T-cell (primary cell): ENCODE measurements at regions of chr4 and their contacts with region 1.

Region 1: GRCh38 chr4:83110223-83110945 is 4.1 kb downstream of the PLAC8 start:
- DNase-seq: peak; percentile 75 to 93 (median 87)
- ATAC-seq: peak; percentile 79 to 81 (median 80)
- H3K4me3 ChIP-seq: peak overlapping the region; percentile 76 to 84
- H3K4me3 Mint-ChIP-seq: peak overlapping the region; percentile 90 to 95 (median 95)
- H3K27ac ChIP-seq: peak overlapping the region; percentile 79
- H3K27ac Mint-ChIP-seq: peak overlapping the region; percentile 92 to 98
- H3K4me1 ChIP-seq: peaks cover 26 to 51% of the 10 kb centered on the region in 2 experiments
- H3K4me1 Mint-ChIP-seq: peaks cover 51 to 65% (median 58%) of the 10 kb centered on the region in 3 donors
- H3K27me3 ChIP-seq: no peaks in the 10 kb centered on the region
- H3K27me3 Mint-ChIP-seq: no peaks in the 10 kb centered on the region

Region 2: DNA sequence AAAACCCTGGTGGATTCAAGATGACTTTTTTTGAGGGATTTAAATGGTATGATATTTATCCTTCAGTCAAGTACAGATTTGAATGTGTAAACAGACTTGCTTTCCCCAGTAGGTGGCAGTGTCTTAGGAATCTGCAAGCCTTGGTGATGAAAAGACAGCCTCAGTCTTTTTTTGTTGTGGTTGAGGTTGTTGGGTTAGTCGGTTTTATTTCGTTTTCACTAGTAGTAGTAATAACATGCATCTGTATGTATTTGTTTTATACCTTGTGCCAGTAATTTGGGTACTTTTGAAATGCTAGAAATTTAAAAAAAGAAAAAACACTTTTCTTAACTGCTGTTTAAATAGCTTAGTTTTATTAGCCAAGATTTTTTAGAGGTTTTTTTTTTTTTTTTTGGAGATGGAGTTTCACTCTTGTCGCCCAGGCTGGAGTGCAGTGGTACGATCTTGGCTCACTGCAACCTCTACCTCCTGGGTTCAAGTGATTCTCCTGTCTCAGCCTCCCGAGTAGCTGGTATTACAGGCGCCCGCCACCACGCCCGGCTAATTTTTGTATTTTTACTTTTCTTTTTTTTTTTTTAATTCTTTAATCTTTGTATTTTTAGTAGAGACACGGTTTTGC is 36.2 kb before region 1 on chr4:
- CTCF ChIA-PET with region 1: interaction called, 6 to 21 read pairs
- POLR2A ChIA-PET with region 1: interaction called, 3 to 7 read pairs
- DNase-seq: peak in 30 of 35 experiments; percentile 14 to 92 (median 54)
- ATAC-seq: peak; percentile 89 to 97 (median 92)
- H3K4me3 ChIP-seq: no peak overlapping the region
- H3K4me3 Mint-ChIP-seq: peak overlapping the region; percentile 47 to 67 (median 55)
- H3K27ac ChIP-seq: no peak overlapping the region
- H3K27ac Mint-ChIP-seq: peak overlapping the region; percentile 49 to 81
- H3K4me1 ChIP-seq: peaks cover 0 to 7% of the 10 kb centered on the region in 2 experiments
- H3K4me1 Mint-ChIP-seq: peaks cover 5 to 28% (median 18%) of the 10 kb centered on the region in 3 donors
- H3K27me3 ChIP-seq: no peaks in the 10 kb centered on the region
- H3K27me3 Mint-ChIP-seq: no peaks in the 10 kb centered on the region

Region 3: DNA sequence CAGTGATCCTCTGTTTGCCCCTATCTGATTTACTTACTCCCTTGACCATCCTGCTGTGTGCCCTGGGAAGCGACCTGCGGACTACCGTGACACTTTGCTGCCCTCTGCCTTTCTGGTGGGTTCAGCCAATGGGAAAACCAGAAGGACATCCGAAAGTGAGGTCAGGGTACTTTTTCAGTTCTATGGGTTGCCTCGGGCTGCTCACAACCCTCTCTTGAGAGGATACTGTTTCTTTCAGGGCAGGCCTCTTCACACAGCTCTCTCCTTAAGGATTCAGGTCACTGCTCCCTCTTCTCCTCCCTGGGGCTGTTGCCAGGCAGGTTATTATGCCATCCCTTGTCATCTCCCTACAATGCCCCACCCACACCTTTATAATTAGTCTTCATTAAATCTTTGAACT is 17.3 kb before region 1 on chr4:
- CTCF ChIA-PET with region 1: interaction called, 6 to 12 read pairs
- POLR2A ChIA-PET with region 1: interaction called, 8 to 9 read pairs
- DNase-seq: no peak
- ATAC-seq: no peak
- H3K4me3 ChIP-seq: no peak overlapping the region
- H3K4me3 Mint-ChIP-seq: no peak overlapping the region
- H3K27ac ChIP-seq: no peak overlapping the region
- H3K27ac Mint-ChIP-seq: peak overlapping the region; percentile 47 to 60
- H3K4me1 ChIP-seq: peaks cover 2 to 9% of the 10 kb centered on the region in 2 experiments
- H3K4me1 Mint-ChIP-seq: peaks cover 35 to 67% (median 56%) of the 10 kb centered on the region in 3 donors
- H3K27me3 ChIP-seq: no peaks in the 10 kb centered on the region
- H3K27me3 Mint-ChIP-seq: no peaks in the 10 kb centered on the region

Region 4: DNA sequence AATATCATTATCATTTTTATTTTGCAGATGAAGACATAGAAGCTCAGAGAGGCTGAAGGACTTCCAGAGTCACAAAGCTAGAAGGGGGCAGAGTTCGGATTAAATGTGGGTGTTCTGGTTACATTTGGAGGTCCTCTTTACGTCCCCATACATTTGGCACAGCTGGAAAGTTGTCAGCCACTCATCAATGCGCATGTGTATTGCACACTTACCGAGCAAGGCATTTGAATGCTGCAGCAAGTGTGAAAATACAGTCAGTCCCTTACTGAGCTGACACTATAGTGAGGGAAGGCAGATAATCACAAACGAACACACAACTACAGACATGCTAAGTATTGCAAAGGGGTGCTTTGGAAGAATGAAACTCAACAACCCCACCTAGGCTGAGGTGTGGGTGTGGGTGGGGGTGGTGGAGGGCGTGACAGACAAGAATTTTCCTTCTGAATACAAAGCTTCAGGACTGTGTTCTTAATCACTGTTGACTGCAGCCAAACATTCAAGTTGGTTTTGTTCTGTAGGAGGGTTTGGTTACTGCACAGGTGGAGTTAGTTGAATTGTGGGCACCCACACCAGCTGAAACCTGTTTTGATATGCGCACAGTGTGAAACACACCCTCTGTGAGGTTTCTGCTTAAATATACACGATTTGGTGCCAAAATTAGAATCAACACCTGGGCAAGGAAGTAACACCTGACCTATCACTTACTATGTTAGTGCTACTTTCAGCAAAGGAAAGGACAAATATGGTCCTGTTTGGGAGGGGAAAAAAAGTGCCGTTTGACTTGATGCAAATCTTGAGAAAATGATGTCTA is 101.9 kb after region 1 on chr4:
- CTCF ChIA-PET with region 1: interaction called, 3 to 29 read pairs
- POLR2A ChIA-PET with region 1: interaction called, 4 to 10 read pairs
- DNase-seq: peak; percentile 22 to 88 (median 70)
- ATAC-seq: peak; percentile 93 to 96 (median 94)
- H3K4me3 ChIP-seq: no peak overlapping the region
- H3K4me3 Mint-ChIP-seq: peak overlapping the region; percentile 26 to 71 (median 38)
- H3K27ac ChIP-seq: peak overlapping the region; percentile 82
- H3K27ac Mint-ChIP-seq: peak overlapping the region; percentile 89 to 90
- H3K4me1 ChIP-seq: peaks cover 54 to 61% of the 10 kb centered on the region in 2 experiments
- H3K4me1 Mint-ChIP-seq: peaks cover 72 to 86% (median 80%) of the 10 kb centered on the region in 3 donors
- H3K27me3 ChIP-seq: no peaks in the 10 kb centered on the region
- H3K27me3 Mint-ChIP-seq: no peaks in the 10 kb centered on the region

Region 5: GRCh38 chr4:83252782-83253405 is 142.5 kb after region 1 on chr4:
- CTCF ChIA-PET with region 1: interaction called, 12 to 54 read pairs
- POLR2A ChIA-PET with region 1: interaction called in 1 of 2 experiments, 4 read pairs
- DNase-seq: peak; percentile 38 to 88 (median 72)
- ATAC-seq: peak; percentile 75 to 94 (median 88)
- H3K4me3 ChIP-seq: no peak overlapping the region
- H3K4me3 Mint-ChIP-seq: peak overlapping the region in 1 of 3 donors; percentile 8
- H3K27ac ChIP-seq: no peak overlapping the region
- H3K27ac Mint-ChIP-seq: peak overlapping the region; percentile 65 to 71
- H3K4me1 ChIP-seq: peaks cover 12 to 19% of the 10 kb centered on the region in 2 experiments
- H3K4me1 Mint-ChIP-seq: peaks cover 22 to 30% (median 29%) of the 10 kb centered on the region in 3 donors
- H3K27me3 ChIP-seq: no peaks in the 10 kb centered on the region
- H3K27me3 Mint-ChIP-seq: no peaks in the 10 kb centered on the region

Region 6: GRCh38 chr4:83284193-83285054 is 174.0 kb after region 1 on chr4 and contains the start of gene COQ2:
- CTCF ChIA-PET with region 1: interaction called in 1 of 2 experiments, 19 read pairs
- POLR2A ChIA-PET with region 1: interaction called in 1 of 2 experiments, 4 read pairs
- DNase-seq: peak; percentile 82 to 97 (median 92)
- ATAC-seq: peak; percentile 92 to 94 (median 94)
- H3K4me3 ChIP-seq: peak within 1 kb of the TSS; percentile 76 to 86
- H3K4me3 Mint-ChIP-seq: peak within 1 kb of the TSS; percentile 94 to 99 (median 97)
- H3K27ac ChIP-seq: peak within 1 kb of the TSS; percentile 83
- H3K27ac Mint-ChIP-seq: peak within 1 kb of the TSS; percentile 96 to 98
- H3K4me1 ChIP-seq: peaks cover 6 to 9% of the 10 kb centered on the region in 2 experiments
- H3K4me1 Mint-ChIP-seq: peaks cover 39 to 42% (median 40%) of the 10 kb centered on the region in 3 donors
- H3K27me3 ChIP-seq: no peaks in the 10 kb centered on the region
- H3K27me3 Mint-ChIP-seq: no peaks in the 10 kb centered on the region
- total RNA-seq, gene COQ2: 4.7 to 9.7 (median 6.2) TPM

Region 7: GRCh38 chr4:83362492-83363329 is 252.3 kb after region 1 on chr4:
- CTCF ChIA-PET with region 1: no interaction called
- POLR2A ChIA-PET with region 1: no interaction called
- DNase-seq: peak in 1 of 35 experiments; percentile 10
- ATAC-seq: peak in 1 of 4 experiments; percentile 41
- H3K4me3 ChIP-seq: no peak overlapping the region
- H3K4me3 Mint-ChIP-seq: no peak overlapping the region
- H3K27ac ChIP-seq: no peak overlapping the region
- H3K27ac Mint-ChIP-seq: no peak overlapping the region
- H3K4me1 ChIP-seq: no peaks in the 10 kb centered on the region
- H3K4me1 Mint-ChIP-seq: peaks cover 0 to 4% (median 0%) of the 10 kb centered on the region in 3 donors
- H3K27me3 ChIP-seq: peaks cover 0 to 5% of the 10 kb centered on the region in 2 experiments
- H3K27me3 Mint-ChIP-seq: no peaks in the 10 kb centered on the region